Caco-2 (cell line): ENCODE measurements at regions of chr6 and their contacts with region 1.

Region 1: DNA sequence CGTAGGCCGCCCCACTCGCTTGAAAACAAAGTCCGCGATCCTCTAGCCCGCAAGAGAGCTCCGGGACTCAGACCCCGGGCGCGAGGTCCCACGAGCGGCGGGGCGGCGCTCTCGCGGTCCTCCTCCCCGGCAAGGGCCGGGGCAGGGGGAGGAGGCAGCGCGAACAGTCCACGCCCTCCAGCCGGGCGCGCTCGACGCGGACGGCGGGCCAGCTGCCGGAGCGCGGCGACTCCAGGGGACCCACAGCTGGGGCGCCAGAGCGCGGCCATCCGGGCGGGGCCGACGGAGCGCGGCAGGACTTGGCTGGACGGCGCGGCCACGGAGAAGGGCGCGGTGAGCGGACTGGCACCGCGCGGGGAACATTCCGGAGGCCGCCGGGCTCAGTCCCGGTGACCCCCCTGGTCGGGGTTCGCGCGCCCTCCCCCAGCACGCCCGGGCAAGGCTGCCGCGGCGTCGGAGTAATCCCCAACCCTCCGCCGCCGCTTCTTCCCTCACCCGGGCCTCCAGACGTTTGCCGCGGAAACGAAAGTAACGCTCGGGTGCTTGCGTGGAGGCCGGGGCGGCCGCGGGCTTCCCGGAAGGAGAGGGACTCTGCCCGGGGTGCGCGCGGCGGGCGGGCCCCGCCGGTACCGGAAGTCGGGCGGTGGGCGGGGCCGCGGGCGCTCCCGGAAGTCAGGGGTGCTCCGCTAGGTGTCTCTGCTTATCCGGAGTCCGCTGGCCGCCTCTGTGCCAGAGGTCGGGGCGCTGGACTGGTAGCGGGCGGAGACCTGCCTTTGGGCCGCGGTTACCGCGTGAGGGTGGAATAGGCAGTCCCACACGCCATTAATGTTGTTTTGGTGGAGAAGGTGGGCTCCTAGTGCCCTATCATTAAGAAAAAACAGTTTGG is at the start of gene RIPK1:
- DNase-seq: peak; percentile 94 to 97
- H3K4me3 ChIP-seq: peak within 1 kb of the TSS; percentile 94
- H3K4me3 Mint-ChIP-seq: peak within 1 kb of the TSS; percentile 81
- H3K27ac Mint-ChIP-seq: peak within 1 kb of the TSS; percentile 79
- H3K4me1 ChIP-seq: peaks cover 9% of the 10 kb centered on the region; the same call in 1 of the 2 replicates
- H3K4me1 Mint-ChIP-seq: peaks cover 6% of the 10 kb centered on the region
- H3K27me3 ChIP-seq: no peaks in the 10 kb centered on the region
- H3K27me3 Mint-ChIP-seq: no peaks in the 10 kb centered on the region
- CTCF ChIP-seq: peak; percentile 26 to 37
- total RNA-seq, gene RIPK1: 15.5 and 15.6 TPM in 2 replicates

Region 2: GRCh38 chr6:2765166-2765895 is 303.2 kb before region 1 on chr6 and contains the start of gene WRNIP1:
- CTCF ChIA-PET with region 1: no interaction called
- POLR2A ChIA-PET with region 1: no interaction called
- intact Hi-C with region 1: loop called (anchors 10 kb)
- DNase-seq: peak; percentile 97 to 98
- H3K4me3 ChIP-seq: peak within 1 kb of the TSS; percentile 90
- H3K4me3 Mint-ChIP-seq: peak within 1 kb of the TSS; percentile 72
- H3K27ac Mint-ChIP-seq: peak within 1 kb of the TSS; percentile 94
- H3K4me1 ChIP-seq: no peaks in the 10 kb centered on the region; the same call in 1 of the 2 replicates
- H3K4me1 Mint-ChIP-seq: peaks cover 18% of the 10 kb centered on the region
- H3K27me3 ChIP-seq: no peaks in the 10 kb centered on the region
- H3K27me3 Mint-ChIP-seq: no peaks in the 10 kb centered on the region
- CTCF ChIP-seq: peak; percentile 32 to 59
- total RNA-seq, gene WRNIP1: 46.5 and 51.7 TPM in 2 replicates

Region 3: DNA sequence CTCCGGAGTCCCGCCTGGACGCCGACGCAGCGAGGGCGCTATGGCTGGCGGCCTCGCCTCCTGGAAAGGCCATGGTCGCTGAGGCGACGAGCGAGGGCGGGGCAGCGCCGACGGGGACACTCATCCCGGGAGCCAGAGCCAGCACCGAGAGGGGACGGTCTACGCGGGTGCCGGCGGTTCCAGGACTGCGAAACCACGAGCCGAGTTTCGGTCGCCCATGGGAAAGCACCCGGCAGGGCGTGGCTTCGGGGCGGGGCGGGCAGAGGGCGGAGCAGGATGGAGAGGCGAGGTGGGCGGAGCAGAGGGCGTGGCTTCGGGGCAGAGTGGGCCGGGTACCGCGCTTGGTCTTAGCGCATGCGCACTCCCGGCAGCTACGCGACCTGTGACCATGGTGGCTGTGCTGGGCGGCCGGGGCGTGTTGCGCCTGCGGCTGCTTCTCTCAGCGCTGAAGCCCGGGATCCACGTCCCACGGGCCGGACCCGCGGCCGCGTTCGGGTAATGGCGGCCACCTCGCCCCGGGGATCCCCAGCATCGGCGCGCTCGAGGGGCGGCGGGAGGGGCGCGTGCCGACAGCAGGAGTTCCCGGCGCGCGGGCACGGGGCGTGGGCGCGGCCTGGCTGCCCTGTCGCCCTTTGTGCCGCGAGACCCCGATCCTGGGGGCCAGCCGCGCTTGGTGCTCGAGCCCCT is 49.9 kb after region 1 on chr6 and contains the start of gene BPHL:
- CTCF ChIA-PET with region 1: no interaction called
- POLR2A ChIA-PET with region 1: no interaction called
- intact Hi-C with region 1: loop called (anchors 1 kb)
- DNase-seq: peak; percentile 96 to 98
- H3K4me3 ChIP-seq: peak within 1 kb of the TSS; percentile 75
- H3K4me3 Mint-ChIP-seq: peak within 1 kb of the TSS; percentile 91
- H3K27ac Mint-ChIP-seq: peak within 1 kb of the TSS; percentile 93
- H3K4me1 ChIP-seq: peaks cover 16% of the 10 kb centered on the region
- H3K4me1 Mint-ChIP-seq: peaks cover 16% of the 10 kb centered on the region
- H3K27me3 ChIP-seq: no peaks in the 10 kb centered on the region
- H3K27me3 Mint-ChIP-seq: no peaks in the 10 kb centered on the region
- CTCF ChIP-seq: no peak
- total RNA-seq, gene BPHL: 29.5 and 31.5 TPM in 2 replicates

Region 4: DNA sequence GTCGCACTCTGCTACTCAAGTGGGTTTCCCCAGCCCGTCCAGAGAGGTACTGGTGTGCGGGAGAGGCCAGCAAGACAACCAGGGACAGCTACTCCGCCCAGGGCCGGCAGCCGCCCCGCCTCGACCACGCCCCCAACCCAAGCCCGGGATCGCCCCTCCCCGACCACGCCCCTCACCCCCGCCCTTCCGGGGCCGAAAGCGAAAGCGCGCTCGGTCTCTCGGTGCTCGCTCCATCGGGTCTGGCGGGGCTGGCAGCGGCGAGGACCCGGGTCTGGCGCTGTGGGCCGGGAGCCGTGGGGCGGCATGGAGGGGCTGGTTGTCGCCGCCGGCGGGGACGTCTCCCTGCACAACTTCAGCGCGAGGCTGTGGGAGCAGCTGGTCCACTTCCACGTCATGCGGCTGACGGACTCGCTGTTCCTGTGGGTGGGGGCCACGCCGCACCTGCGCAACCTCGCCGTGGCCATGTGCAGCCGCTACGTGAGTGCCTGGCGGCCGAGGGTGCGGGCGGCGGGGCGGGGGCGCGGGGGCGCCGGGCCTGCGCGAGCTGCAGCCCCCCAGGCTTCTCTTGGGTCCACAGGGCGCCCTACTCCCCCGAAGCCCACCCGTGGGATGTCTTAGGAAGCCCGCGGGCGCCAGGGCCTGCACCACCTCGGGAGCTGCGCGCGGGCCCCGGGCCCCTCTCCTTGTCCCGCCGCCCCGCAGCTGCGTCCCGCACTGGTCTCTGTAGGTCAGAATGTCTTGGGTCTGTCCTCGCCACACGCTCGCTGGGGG is 190.3 kb after region 1 on chr6 and contains the start of gene PSMG4:
- CTCF ChIA-PET with region 1: no interaction called
- POLR2A ChIA-PET with region 1: no interaction called
- intact Hi-C with region 1: loop called (anchors 2 kb)
- DNase-seq: peak; percentile 94 to 98
- H3K4me3 ChIP-seq: peak within 1 kb of the TSS; percentile 95
- H3K4me3 Mint-ChIP-seq: peak within 1 kb of the TSS; percentile 90
- H3K27ac Mint-ChIP-seq: peak within 1 kb of the TSS; percentile 81
- H3K4me1 ChIP-seq: no peaks in the 10 kb centered on the region; the same call in 1 of the 2 replicates
- H3K4me1 Mint-ChIP-seq: peaks cover 7% of the 10 kb centered on the region
- H3K27me3 ChIP-seq: no peaks in the 10 kb centered on the region
- H3K27me3 Mint-ChIP-seq: no peaks in the 10 kb centered on the region
- CTCF ChIP-seq: no peak
- total RNA-seq, gene PSMG4: 20.9 and 21.3 TPM in 2 replicates